PC-3 (cell line): ENCODE measurements at regions of chr2 and their contacts with region 1.

Region 1: GRCh38 chr2:12050396-12050795 is 304.0 kb downstream of the LPIN1 start:
- DNase-seq: peak; percentile 90
- ATAC-seq: peak; percentile 83
- H3K4me3 ChIP-seq: no peak overlapping the region
- H3K27ac ChIP-seq: peak overlapping the region; percentile 78
- H3K4me1 ChIP-seq: peaks cover 42% of the 10 kb centered on the region
- H3K27me3 ChIP-seq: no peaks in the 10 kb centered on the region
- CTCF ChIP-seq: peak; percentile 76

Region 2: GRCh38 chr2:11598228-11598731 is 452.1 kb before region 1 on chr2:
- CTCF ChIA-PET with region 1: no interaction called
- POLR2A ChIA-PET with region 1: interaction called, 10 read pairs
- intact Hi-C with region 1: no loop called
- DNase-seq: peak; percentile 64
- ATAC-seq: peak; percentile 88
- H3K4me3 ChIP-seq: no peak overlapping the region
- H3K27ac ChIP-seq: no peak overlapping the region
- H3K4me1 ChIP-seq: peaks cover 12% of the 10 kb centered on the region
- H3K27me3 ChIP-seq: no peaks in the 10 kb centered on the region
- CTCF ChIP-seq: no peak

Region 3: DNA sequence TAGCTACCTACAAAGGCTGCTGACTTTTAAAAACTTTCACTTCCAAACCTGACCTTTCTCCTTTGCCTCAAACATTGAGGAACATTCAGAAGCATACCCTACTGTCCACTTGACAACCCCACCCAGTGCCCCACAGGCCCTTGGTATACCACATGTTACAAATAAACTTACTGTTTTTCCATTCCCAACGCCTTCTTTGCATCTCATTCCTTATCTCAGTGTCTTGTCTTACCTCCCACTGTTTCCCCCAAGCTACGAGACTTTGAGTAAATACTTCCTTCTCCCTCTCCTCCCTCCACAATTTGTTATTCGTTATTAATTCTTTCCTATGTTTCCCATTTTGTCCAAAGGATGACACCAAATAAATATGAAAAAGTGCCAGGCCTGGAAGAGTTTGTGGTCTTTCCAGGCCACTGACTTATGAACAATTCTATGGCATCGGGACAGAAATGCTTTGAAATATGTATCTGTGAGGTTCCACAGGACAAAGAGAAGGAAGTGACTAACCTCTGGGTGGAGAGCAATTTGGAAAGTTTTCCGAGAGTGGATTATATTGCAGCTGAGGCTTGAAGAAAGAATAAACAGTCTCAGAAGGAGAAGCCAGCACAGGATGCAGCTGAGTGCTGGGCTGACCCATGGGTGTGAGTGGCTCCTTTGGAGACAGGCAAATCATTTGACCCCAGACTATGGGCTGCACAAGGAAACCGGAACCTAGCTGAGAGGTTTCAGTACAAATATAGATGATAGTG is 105.1 kb after region 1 on chr2:
- CTCF ChIA-PET with region 1: no interaction called
- POLR2A ChIA-PET with region 1: no interaction called
- intact Hi-C with region 1: loop called (anchors 1 kb)
- DNase-seq: peak; percentile 97
- ATAC-seq: peak; percentile 99
- H3K4me3 ChIP-seq: no peak overlapping the region
- H3K27ac ChIP-seq: peak overlapping the region; percentile 66
- H3K4me1 ChIP-seq: peaks cover 20% of the 10 kb centered on the region
- H3K27me3 ChIP-seq: no peaks in the 10 kb centered on the region
- CTCF ChIP-seq: no peak

Region 4: GRCh38 chr2:12227941-12228608 is 177.7 kb after region 1 on chr2:
- CTCF ChIA-PET with region 1: no interaction called
- POLR2A ChIA-PET with region 1: no interaction called
- intact Hi-C with region 1: no loop called
- DNase-seq: no peak
- ATAC-seq: no peak
- H3K4me3 ChIP-seq: no peak overlapping the region
- H3K27ac ChIP-seq: no peak overlapping the region
- H3K4me1 ChIP-seq: no peaks in the 10 kb centered on the region
- H3K27me3 ChIP-seq: no peaks in the 10 kb centered on the region
- CTCF ChIP-seq: no peak

Region 5: GRCh38 chr2:12282780-12283695 is 232.6 kb after region 1 on chr2:
- CTCF ChIA-PET with region 1: no interaction called
- POLR2A ChIA-PET with region 1: interaction called, 3 read pairs
- intact Hi-C with region 1: loop called (anchors 1 kb)
- DNase-seq: no peak
- ATAC-seq: no peak
- H3K4me3 ChIP-seq: no peak overlapping the region
- H3K27ac ChIP-seq: no peak overlapping the region
- H3K4me1 ChIP-seq: peaks cover 36% of the 10 kb centered on the region
- H3K27me3 ChIP-seq: no peaks in the 10 kb centered on the region
- CTCF ChIP-seq: no peak

Region 6: GRCh38 chr2:12931186-12931844 is 880.9 kb after region 1 on chr2:
- CTCF ChIA-PET with region 1: no interaction called
- POLR2A ChIA-PET with region 1: no interaction called
- intact Hi-C with region 1: loop called (anchors 5 kb)
- DNase-seq: peak; percentile 67
- ATAC-seq: peak; percentile 16; the same call in 1 of the 2 replicates
- H3K4me3 ChIP-seq: no peak overlapping the region
- H3K27ac ChIP-seq: peak overlapping the region; percentile 97
- H3K4me1 ChIP-seq: peaks cover 33% of the 10 kb centered on the region
- H3K27me3 ChIP-seq: no peaks in the 10 kb centered on the region
- CTCF ChIP-seq: peak; percentile 94